HepG2 (cell line): ENCODE measurements at regions of chr1 and their contacts with region 1.

Region 1: DNA sequence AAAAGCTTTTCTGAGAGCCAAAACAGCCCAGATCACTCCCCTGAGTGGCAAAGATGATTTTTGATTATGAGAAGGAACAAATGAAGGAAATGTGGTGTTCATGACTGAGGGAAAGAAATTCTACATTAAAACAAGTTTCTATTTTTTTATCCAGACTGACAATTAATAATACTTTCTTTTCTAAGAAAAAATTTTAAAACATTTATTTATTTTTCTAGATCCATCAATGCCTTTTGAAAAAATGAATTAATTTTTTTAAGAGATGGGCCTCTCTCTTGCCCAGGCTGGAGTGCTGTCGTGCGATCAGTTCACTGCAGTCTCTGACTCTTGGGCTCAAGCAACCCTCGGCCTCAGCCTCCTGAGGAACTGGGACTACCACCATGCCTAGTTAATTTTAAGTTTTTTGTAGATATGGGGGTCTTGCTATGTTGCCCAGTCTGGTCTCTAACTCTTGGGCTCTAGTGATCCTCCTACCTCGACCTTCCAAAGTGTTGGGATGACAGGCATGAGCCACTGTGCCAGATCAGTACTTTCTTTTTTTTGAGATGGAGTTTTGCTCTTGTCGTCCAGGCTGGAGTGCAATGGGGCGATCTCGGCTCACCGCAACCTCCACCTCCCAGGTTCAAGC is 11.2 kb upstream of the TXNIP start:
- DNase-seq: no peak
- ATAC-seq: no peak
- H3K4me3 ChIP-seq: no peak overlapping the region
- H3K27ac ChIP-seq: no peak overlapping the region
- H3K4me1 ChIP-seq: peaks cover 11% of the 10 kb centered on the region
- H3K27me3 ChIP-seq: no peaks in the 10 kb centered on the region
- CTCF ChIP-seq: no peak
- EP300 ChIP-seq: no peak
- POLR2A ChIP-seq: no peak
- RAD21 ChIP-seq: no peak

Region 2: DNA sequence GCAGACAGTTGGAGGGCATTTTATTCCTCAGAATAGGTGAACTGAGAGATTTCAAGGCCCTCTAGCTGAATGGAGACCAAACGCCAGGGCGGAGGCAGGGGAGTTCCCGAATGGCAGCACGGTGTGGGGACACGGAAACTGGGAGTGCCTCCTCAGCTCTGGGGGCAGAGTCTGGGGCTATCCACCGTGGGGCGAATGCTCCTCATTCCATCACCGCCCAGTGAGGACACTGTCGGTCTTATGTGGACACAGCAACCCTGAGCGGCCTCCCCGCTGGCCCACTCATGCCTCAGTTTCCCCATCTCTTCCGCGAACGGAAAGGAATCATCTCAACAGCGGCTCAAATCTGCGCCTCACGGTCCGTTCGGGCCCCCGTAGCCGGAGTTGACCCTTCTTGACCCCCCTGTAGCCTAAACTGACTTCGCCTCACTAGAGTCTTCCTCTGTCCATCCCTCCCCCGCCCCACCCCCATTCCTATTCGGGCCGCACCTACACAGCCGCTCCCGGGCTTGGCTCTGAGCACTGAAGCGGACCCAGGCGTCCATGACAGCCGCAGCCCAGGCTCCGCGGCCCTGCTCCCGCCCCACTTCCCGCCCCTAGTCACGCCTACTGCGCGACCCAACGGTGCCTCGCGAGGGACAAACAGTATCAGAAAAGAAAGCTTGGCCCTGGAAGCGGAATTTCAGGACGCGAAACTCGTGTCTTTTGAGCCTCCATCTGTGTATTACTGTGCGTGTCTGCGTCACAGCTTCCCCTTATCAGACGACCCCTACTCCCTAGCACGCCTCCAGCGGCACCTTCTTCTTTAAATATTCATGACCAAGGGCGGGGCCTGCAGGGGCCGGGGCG is 89.3 kb before region 1 on chr1 and contains the start of gene PEX11B:
- CTCF ChIA-PET with region 1: no interaction called
- POLR2A ChIA-PET with region 1: no interaction called
- in situ Hi-C with region 1: no loop called
- intact Hi-C with region 1: loop called (anchors 5 kb)
- DNase-seq: peak; percentile 70
- ATAC-seq: peak; percentile 90
- H3K4me3 ChIP-seq: peak within 1 kb of the TSS; percentile 79 to 99 (median 92)
- H3K27ac ChIP-seq: peak within 1 kb of the TSS; percentile 78
- H3K4me1 ChIP-seq: peaks cover 18% of the 10 kb centered on the region
- H3K27me3 ChIP-seq: no peaks in the 10 kb centered on the region; a peak in 1 of 5 replicates
- CTCF ChIP-seq: no peak; the same call in 1 of the 2 replicates
- EP300 ChIP-seq: no peak
- POLR2A ChIP-seq: peak; percentile 25 to 68; a peak in 2 of 4 replicates
- RAD21 ChIP-seq: no peak
- total RNA-seq, gene PEX11B: 21.6 and 26.2 TPM in 2 replicates

Region 3: DNA sequence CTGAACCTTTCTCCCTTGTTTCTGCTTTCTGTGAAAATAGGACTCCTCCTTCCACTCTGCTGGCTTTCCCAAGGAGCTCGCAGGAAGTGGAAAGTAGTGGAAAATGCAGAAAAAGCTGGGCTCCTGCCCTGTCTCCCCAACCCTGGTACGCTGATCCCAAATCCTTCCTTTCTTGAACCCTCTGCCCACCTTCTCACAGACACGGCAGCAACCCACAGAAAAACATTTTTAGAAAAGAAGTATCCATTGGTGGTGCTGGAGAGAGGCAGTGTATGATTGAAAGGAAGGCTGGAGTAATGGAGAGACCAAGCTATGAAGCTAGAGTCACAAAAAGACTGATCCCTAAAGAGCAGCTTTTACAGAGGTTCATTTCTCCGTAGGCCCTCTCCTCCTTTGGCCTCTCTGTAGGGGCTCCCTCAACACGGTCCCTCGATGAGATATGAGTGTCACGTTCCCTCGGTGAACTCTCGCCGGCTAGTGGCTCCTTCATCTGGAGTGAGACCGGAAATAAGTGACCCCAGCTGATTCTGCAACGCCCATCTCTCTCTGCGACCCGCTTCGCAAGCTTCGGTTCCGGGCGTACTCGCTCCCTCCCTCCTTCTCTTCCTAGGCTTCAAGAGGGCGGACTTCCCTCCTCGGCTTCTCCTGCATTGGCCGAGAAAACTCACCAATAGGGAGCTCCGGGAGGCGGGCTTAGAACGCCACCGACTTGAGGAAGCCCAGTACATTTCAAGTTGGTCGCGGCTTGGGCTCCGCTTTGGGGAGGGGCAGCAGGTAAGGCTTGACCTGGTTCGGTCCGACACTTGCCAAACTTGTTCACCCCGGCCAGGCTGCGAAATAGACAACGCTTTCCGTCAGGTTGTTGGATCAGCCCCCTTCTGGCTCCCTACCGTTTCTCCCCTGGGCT is 43.4 kb before region 1 on chr1 and contains the starts of genes ANKRD34A and POLR3GL:
- CTCF ChIA-PET with region 1: no interaction called
- POLR2A ChIA-PET with region 1: interaction called, 3 read pairs
- in situ Hi-C with region 1: no loop called
- intact Hi-C with region 1: loop called (anchors 5 kb)
- DNase-seq: peak; percentile 92
- ATAC-seq: peak; percentile 88
- H3K4me3 ChIP-seq: peak within 1 kb of the TSS; percentile 77 to 84 (median 82)
- H3K27ac ChIP-seq: peak within 1 kb of the TSS; percentile 70
- H3K4me1 ChIP-seq: peaks cover 45% of the 10 kb centered on the region
- H3K27me3 ChIP-seq: peaks cover 0 to 28% of the 10 kb centered on the region in 2 experiments; a peak in 3 of 5 replicates
- CTCF ChIP-seq: peak; percentile 22
- EP300 ChIP-seq: no peak
- POLR2A ChIP-seq: peak; percentile 57 to 85
- RAD21 ChIP-seq: 0 out of 2 replicates have a peak, but pooled peaks have one; percentile 29
- total RNA-seq, gene ANKRD34A: 0.07 and 0.14 TPM in 2 replicates
- total RNA-seq, gene POLR3GL: 12.4 and 15.3 TPM in 2 replicates

Region 4: GRCh38 chr1:145978854-145979759 is 28.5 kb before region 1 on chr1:
- CTCF ChIA-PET with region 1: interaction called, 60 read pairs
- POLR2A ChIA-PET with region 1: interaction called, 9 read pairs
- in situ Hi-C with region 1: loop called (anchors 5 kb)
- intact Hi-C with region 1: loop called (anchors 1 kb)
- DNase-seq: peak; percentile 50
- ATAC-seq: peak; percentile 53
- H3K4me3 ChIP-seq: no peak overlapping the region
- H3K27ac ChIP-seq: no peak overlapping the region
- H3K4me1 ChIP-seq: peaks cover 66% of the 10 kb centered on the region
- H3K27me3 ChIP-seq: no peaks in the 10 kb centered on the region
- CTCF ChIP-seq: peak; percentile 47
- EP300 ChIP-seq: no peak
- POLR2A ChIP-seq: no peak
- RAD21 ChIP-seq: no peak